ENCODE measurements at regions of chr15 and their contacts with region 1.

Region 1: DNA sequence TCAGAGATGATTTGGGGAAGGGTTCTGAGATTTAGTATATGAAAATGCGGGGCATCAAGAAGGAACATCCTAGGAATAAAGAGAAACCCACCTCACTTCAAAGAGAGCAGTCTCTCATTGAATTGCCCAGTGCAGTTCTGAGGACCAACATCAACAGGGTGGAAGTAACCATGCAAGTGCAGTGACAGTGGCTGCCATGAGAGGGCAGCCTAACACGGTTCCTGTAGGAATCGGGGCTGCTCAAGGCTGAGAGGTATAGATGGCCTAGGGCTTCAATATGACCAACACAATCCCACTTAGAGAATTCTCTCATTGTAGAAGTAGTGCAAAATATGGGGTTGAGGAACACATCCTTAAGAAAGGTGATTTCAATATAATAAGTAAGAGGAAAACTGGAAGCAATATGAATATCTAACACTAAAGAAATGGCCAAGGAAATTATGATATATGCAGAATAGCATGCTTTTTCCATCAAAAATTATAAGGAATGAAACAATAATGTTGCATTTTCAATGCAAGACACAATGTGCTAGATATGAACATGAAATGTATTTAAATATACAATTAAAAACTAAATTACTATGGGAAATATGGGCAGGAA is 51.1 kb upstream of the ARRDC4 start:
- DNase-seq: peak; percentile 58 to 75
- H3K4me3 ChIP-seq: no peak overlapping the region
- H3K4me3 Mint-ChIP-seq: no peak overlapping the region
- H3K27ac Mint-ChIP-seq: no peak overlapping the region
- H3K4me1 ChIP-seq: no peaks in the 10 kb centered on the region
- H3K4me1 Mint-ChIP-seq: no peaks in the 10 kb centered on the region
- H3K27me3 ChIP-seq: no peaks in the 10 kb centered on the region
- H3K27me3 Mint-ChIP-seq: peaks cover 6% of the 10 kb centered on the region
- CTCF ChIP-seq: peak; percentile 62 to 88

Region 2: DNA sequence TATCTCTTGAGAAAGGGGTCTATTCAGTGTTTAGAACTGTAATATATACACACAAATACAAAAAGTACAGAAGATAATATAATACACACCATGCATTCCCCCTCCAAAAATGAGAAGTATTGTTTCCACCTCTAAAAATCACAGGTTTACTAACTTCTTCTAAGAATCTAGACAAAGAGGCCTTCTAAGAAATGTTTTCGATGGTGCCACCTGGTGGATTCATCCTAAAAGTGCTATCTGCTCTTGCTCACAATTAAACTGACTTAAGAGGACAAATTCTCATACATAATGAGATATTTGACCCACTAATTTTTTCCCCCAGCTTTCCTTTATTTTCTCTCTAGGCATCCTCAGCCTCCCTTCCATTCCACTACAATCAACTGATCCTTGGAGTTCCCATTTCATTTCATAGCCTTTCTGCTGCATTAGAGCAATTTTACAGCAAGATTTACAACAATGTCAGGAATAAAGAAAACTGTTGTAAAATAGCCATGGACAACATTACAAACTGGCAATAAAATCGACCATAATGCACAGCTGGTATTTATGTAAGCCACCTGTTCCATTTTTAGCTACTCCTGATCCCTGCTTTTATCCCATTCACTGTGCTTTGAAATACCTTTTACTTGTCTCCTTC is 175.7 kb after region 1 on chr15:
- CTCF ChIA-PET with region 1: no interaction called
- POLR2A ChIA-PET with region 1: no interaction called
- intact Hi-C with region 1: loop called (anchors 1 kb)
- DNase-seq: peak in 1 of 2 experiments; percentile 29
- H3K4me3 ChIP-seq: no peak overlapping the region
- H3K4me3 Mint-ChIP-seq: no peak overlapping the region
- H3K27ac Mint-ChIP-seq: no peak overlapping the region
- H3K4me1 ChIP-seq: no peaks in the 10 kb centered on the region
- H3K4me1 Mint-ChIP-seq: no peaks in the 10 kb centered on the region
- H3K27me3 ChIP-seq: no peaks in the 10 kb centered on the region
- H3K27me3 Mint-ChIP-seq: no peaks in the 10 kb centered on the region
- CTCF ChIP-seq: peak; percentile 43 to 55